ENCODE measurements at regions of chr19 and their contacts with region 1.

Region 1: GRCh38 chr19:49097455-49098288 is 12.4 kb downstream of the SNRNP70 start:
- DNase-seq: no peak
- H3K4me3 ChIP-seq: no peak overlapping the region
- H3K27ac ChIP-seq: no peak overlapping the region
- H3K4me1 ChIP-seq: peaks cover 11% of the 10 kb centered on the region
- H3K27me3 ChIP-seq: no peaks in the 10 kb centered on the region
- CTCF ChIP-seq: peak; percentile 90 to 97 (median 91)
- POLR2A ChIP-seq: no peak

Region 2: DNA sequence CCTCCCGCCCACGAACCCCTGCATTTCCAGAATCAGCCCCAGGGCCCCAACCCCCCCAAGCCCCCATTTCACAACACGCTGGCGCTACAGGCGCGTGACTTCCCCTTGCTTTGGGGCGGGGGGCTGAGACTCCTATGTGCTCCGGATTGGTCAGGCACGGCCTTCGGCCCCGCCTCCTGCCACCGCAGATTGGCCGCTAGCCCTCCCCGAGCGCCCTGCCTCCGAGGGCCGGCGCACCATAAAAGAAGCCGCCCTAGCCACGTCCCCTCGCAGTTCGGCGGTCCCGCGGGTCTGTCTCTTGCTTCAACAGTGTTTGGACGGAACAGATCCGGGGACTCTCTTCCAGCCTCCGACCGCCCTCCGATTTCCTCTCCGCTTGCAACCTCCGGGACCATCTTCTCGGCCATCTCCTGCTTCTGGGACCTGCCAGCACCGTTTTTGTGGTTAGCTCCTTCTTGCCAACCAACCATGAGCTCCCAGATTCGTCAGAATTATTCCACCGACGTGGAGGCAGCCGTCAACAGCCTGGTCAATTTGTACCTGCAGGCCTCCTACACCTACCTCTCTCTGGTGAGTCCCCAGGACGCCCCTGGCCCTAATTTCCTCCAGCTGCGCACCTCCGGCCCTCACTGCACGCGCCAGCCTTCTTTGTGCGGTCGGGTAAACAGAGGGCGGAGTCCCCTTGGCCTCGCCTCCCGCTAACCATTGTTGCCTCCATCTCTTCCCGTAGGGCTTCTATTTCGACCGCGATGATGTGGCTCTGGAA is 132.4 kb before region 1 on chr19 and contains the start of gene FTL:
- intact Hi-C with region 1: no loop called
- DNase-seq: peak in 1 of 2 donors; percentile 99
- H3K4me3 ChIP-seq: peak within 1 kb of the TSS; percentile 72 to 87
- H3K27ac ChIP-seq: peak within 1 kb of the TSS; percentile 96
- H3K4me1 ChIP-seq: peaks cover 49% of the 10 kb centered on the region
- H3K27me3 ChIP-seq: no peaks in the 10 kb centered on the region
- CTCF ChIP-seq: no peak
- POLR2A ChIP-seq: peak; percentile 43 to 100
- total RNA-seq, gene FTL: 4,380 TPM

Region 3: GRCh38 chr19:49042177-49042576 is 55.5 kb before region 1 on chr19:
- intact Hi-C with region 1: no loop called
- DNase-seq: no peak
- H3K4me3 ChIP-seq: no peak overlapping the region
- H3K27ac ChIP-seq: no peak overlapping the region
- H3K4me1 ChIP-seq: no peaks in the 10 kb centered on the region
- H3K27me3 ChIP-seq: no peaks in the 10 kb centered on the region
- CTCF ChIP-seq: no peak
- POLR2A ChIP-seq: no peak

Region 4: GRCh38 chr19:49148784-49149651 is 51.3 kb after region 1 on chr19:
- intact Hi-C with region 1: loop called (anchors 5 kb)
- DNase-seq: no peak
- H3K4me3 ChIP-seq: peak overlapping the region; percentile 55 to 84
- H3K27ac ChIP-seq: peak overlapping the region; percentile 66
- H3K4me1 ChIP-seq: peaks cover 48% of the 10 kb centered on the region
- H3K27me3 ChIP-seq: no peaks in the 10 kb centered on the region
- CTCF ChIP-seq: no peak
- POLR2A ChIP-seq: peak in 1 of 2 donors; percentile 51

Region 5: GRCh38 chr19:49200238-49200862 is 102.7 kb after region 1 on chr19:
- intact Hi-C with region 1: loop called (anchors 5 kb)
- DNase-seq: no peak
- H3K4me3 ChIP-seq: no peak overlapping the region
- H3K27ac ChIP-seq: no peak overlapping the region
- H3K4me1 ChIP-seq: no peaks in the 10 kb centered on the region
- H3K27me3 ChIP-seq: no peaks in the 10 kb centered on the region
- CTCF ChIP-seq: no peak
- POLR2A ChIP-seq: no peak